ENCODE measurements at regions of chr1 and their contacts with region 1.

Region 1: GRCh38 chr1:241834733-241835377 is 13.1 kb upstream of the EXO1 start:
- DNase-seq: peak; percentile 76
- ATAC-seq: peak; percentile 52
- H3K4me3 ChIP-seq: no peak overlapping the region
- H3K27ac ChIP-seq: no peak overlapping the region
- H3K4me1 ChIP-seq: peaks cover 28% of the 10 kb centered on the region
- H3K27me3 ChIP-seq: no peaks in the 10 kb centered on the region
- CTCF ChIP-seq: peak; percentile 93

Region 2: DNA sequence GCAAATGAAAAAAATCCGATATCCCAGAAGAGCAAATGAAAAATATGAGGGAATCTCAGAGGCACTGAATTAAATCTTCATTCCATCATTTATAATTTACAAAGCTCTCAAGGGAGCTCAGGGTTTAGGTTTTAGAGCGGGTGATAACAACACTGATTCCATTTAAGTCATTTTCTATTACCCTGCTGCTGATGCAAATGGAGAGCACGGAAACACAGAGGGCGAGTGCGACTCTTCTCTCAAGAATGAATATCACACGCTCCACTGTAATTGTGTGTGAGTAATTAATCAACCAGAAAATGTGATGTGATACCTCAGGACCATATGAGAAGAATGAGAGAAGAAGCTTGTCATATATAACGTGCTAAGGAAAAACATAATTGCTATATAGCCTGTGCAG is 217.4 kb before region 1 on chr1:
- CTCF ChIA-PET with region 1: no interaction called
- POLR2A ChIA-PET with region 1: no interaction called
- intact Hi-C with region 1: no loop called
- DNase-seq: no peak
- ATAC-seq: no peak
- H3K4me3 ChIP-seq: no peak overlapping the region
- H3K27ac ChIP-seq: no peak overlapping the region
- H3K4me1 ChIP-seq: peaks cover 40% of the 10 kb centered on the region
- H3K27me3 ChIP-seq: no peaks in the 10 kb centered on the region
- CTCF ChIP-seq: no peak

Region 3: GRCh38 chr1:241716915-241717656 is 117.8 kb before region 1 on chr1:
- CTCF ChIA-PET with region 1: no interaction called
- POLR2A ChIA-PET with region 1: no interaction called
- intact Hi-C with region 1: loop called (anchors 5 kb)
- DNase-seq: peak; percentile 67
- ATAC-seq: peak; percentile 41
- H3K4me3 ChIP-seq: no peak overlapping the region; the same call in 1 of the 2 replicates
- H3K27ac ChIP-seq: peak overlapping the region; percentile 60
- H3K4me1 ChIP-seq: peaks cover 23% of the 10 kb centered on the region
- H3K27me3 ChIP-seq: no peaks in the 10 kb centered on the region
- CTCF ChIP-seq: no peak

Measured in PC-3 (cell line).